ENCODE measurements at regions of chr14 and their contacts with region 1.

Region 1: DNA sequence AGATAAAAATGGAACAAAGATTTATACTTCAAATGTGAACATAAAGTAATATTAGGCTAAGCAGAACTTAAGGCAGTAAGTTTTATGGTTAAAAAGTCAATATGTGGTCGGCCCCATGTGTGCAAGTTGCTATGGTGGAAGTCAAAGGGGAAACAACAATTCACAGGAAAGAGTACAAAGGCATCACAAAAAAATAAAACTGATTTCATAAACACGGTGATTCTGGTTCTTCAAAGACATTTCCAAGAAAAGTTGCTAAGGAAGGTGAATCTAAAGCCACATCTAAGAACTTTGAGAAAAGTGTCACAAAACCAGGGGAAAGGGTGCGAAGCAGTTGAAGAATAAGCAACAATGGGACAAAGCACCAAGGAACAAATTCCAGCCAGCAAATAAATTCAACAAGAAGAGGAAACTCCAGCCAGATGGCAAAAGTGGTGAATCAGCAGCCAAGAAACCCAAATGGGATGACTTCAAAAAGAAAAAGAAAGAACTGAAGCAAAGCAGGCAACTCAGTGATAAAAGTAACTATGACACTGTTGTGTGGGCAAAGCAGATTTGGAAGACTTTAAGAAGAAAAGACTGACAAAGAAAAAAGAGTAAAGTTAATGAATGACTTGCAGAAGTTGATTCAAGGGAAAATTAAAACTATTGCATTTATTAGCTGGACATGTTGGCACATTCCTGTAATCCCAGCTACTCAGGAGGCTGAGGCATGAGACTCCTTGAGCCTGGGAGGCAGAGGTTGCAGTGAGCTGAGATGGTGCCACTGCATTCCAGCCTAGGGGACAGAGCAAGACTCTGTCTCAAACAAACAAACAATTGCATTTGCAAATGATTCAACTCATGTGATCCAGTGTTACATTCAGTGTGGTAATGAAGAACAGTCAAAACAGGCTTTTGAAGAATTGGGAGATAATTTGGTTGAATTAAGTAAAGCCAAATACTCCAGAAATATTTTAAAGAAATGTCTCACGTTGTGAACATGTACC is 19.5 kb downstream of the PTGDR start:
- DNase-seq: no peak
- H3K4me3 ChIP-seq: no peak overlapping the region
- H3K4me3 Mint-ChIP-seq: no peak overlapping the region
- H3K27ac ChIP-seq: no peak overlapping the region
- H3K27ac Mint-ChIP-seq: no peak overlapping the region
- H3K4me1 ChIP-seq: peaks cover 7 to 9% of the 10 kb centered on the region in 2 donors
- H3K4me1 Mint-ChIP-seq: peaks cover 11% of the 10 kb centered on the region
- H3K27me3 ChIP-seq: no peaks in the 10 kb centered on the region
- H3K27me3 Mint-ChIP-seq: peaks cover 0 to 4% (median 0%) of the 10 kb centered on the region in 3 donors
- CTCF ChIP-seq: no peak

Region 2: DNA sequence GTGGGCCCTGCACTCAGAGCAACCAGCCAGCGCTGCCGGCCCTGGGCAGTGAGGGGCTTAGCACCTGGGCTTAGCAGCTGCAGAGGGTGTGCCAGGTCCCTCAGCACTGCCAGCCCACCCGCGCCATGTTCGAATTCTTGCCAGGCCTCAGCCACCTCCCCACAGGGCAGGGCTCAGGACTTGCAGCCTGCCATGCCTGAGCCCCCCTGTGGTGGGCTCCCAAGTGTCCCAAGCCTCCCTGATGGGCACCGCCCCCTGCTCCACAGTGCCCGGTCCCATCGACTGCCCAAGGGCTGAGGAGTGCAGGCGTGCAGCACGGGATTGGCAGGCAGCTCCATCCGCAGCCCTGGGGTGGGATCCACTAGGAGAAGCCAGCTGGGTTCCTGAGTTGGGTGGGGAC is 120.1 kb before region 1 on chr14:
- intact Hi-C with region 1: no loop called
- DNase-seq: no peak
- H3K4me3 ChIP-seq: no peak overlapping the region
- H3K4me3 Mint-ChIP-seq: no peak overlapping the region
- H3K27ac ChIP-seq: no peak overlapping the region
- H3K27ac Mint-ChIP-seq: no peak overlapping the region
- H3K4me1 ChIP-seq: no peaks in the 10 kb centered on the region
- H3K4me1 Mint-ChIP-seq: no peaks in the 10 kb centered on the region
- H3K27me3 ChIP-seq: no peaks in the 10 kb centered on the region
- H3K27me3 Mint-ChIP-seq: peaks cover 0 to 1% (median 0%) of the 10 kb centered on the region in 3 donors
- CTCF ChIP-seq: no peak

Region 3: DNA sequence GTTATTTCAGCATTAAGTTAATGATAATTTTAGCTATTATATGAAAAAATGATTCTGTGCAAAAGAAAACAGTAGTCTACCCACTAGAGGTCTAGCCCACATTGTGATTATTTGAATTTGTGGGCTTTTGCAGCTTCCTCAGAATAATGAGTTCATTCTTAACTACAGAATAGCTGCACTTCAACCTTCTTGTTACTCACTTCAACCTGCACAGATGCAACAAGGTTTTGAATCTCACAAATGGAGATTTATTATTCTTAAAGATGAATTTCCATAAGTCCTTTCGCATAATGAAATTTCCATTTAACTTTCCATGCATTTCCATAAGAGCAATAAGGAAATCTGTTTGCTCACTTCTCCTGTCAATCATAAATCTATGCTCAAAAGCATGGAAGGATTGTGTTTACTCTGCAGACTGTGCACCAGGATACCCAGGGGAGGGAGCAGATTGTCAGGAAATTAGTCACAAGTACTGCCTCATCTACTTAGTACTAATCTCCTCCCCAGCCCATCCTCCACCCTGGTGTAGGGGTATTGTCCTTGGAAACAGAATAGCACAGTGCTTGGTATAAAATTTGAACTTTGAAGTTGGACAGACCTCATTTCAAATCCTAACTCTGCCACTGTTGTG is 51.2 kb after region 1 on chr14:
- intact Hi-C with region 1: no loop called
- DNase-seq: peak in 1 of 3 donors; percentile 20
- H3K4me3 ChIP-seq: no peak overlapping the region
- H3K4me3 Mint-ChIP-seq: no peak overlapping the region
- H3K27ac ChIP-seq: no peak overlapping the region
- H3K27ac Mint-ChIP-seq: peak overlapping the region in 1 of 7 donors; percentile 20
- H3K4me1 ChIP-seq: peaks cover 9 to 11% of the 10 kb centered on the region in 2 donors
- H3K4me1 Mint-ChIP-seq: peaks cover 14% of the 10 kb centered on the region
- H3K27me3 ChIP-seq: peaks cover 7 to 10% of the 10 kb centered on the region in 2 donors
- H3K27me3 Mint-ChIP-seq: peaks cover 8 to 17% (median 16%) of the 10 kb centered on the region in 3 donors
- CTCF ChIP-seq: no peak

Region 4: DNA sequence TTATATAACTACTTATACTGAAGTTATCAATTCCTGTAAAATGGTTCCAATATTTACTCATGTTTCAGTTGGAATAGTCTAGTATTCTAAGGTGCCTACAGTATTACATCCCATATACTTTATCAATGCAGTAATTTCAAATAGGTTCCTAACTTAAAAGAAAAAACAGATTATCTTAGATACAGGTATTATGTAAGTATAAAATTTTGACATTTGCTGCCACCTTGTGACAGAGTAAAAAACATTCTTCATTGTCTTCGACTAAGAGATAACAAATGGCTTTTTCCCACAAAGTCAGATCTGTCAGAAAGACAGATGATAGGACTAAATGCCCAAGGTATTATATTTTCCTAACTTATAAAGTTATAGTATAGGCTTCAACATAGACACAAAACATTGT is 186.6 kb after region 1 on chr14:
- intact Hi-C with region 1: loop called (anchors 5 to 10 kb)
- DNase-seq: peak; percentile 15 to 52 (median 36)
- H3K4me3 ChIP-seq: no peak overlapping the region
- H3K4me3 Mint-ChIP-seq: no peak overlapping the region
- H3K27ac ChIP-seq: no peak overlapping the region
- H3K27ac Mint-ChIP-seq: no peak overlapping the region
- H3K4me1 ChIP-seq: no peaks in the 10 kb centered on the region
- H3K4me1 Mint-ChIP-seq: peaks cover 2% of the 10 kb centered on the region
- H3K27me3 ChIP-seq: no peaks in the 10 kb centered on the region
- H3K27me3 Mint-ChIP-seq: peaks cover 0 to 4% (median 2%) of the 10 kb centered on the region in 3 donors
- CTCF ChIP-seq: peak; percentile 62

Region 5: GRCh38 chr14:52527049-52527448 is 240.1 kb after region 1 on chr14:
- intact Hi-C with region 1: no loop called
- DNase-seq: no peak
- H3K4me3 ChIP-seq: no peak overlapping the region
- H3K4me3 Mint-ChIP-seq: no peak overlapping the region
- H3K27ac ChIP-seq: no peak overlapping the region
- H3K27ac Mint-ChIP-seq: peak overlapping the region in 1 of 7 donors; percentile 24
- H3K4me1 ChIP-seq: no peaks in the 10 kb centered on the region
- H3K4me1 Mint-ChIP-seq: no peaks in the 10 kb centered on the region
- H3K27me3 ChIP-seq: no peaks in the 10 kb centered on the region
- H3K27me3 Mint-ChIP-seq: no peaks in the 10 kb centered on the region
- CTCF ChIP-seq: no peak